GM12878 (cell line): ENCODE measurements at regions of chr7 and their contacts with region 1.

Region 1: DNA sequence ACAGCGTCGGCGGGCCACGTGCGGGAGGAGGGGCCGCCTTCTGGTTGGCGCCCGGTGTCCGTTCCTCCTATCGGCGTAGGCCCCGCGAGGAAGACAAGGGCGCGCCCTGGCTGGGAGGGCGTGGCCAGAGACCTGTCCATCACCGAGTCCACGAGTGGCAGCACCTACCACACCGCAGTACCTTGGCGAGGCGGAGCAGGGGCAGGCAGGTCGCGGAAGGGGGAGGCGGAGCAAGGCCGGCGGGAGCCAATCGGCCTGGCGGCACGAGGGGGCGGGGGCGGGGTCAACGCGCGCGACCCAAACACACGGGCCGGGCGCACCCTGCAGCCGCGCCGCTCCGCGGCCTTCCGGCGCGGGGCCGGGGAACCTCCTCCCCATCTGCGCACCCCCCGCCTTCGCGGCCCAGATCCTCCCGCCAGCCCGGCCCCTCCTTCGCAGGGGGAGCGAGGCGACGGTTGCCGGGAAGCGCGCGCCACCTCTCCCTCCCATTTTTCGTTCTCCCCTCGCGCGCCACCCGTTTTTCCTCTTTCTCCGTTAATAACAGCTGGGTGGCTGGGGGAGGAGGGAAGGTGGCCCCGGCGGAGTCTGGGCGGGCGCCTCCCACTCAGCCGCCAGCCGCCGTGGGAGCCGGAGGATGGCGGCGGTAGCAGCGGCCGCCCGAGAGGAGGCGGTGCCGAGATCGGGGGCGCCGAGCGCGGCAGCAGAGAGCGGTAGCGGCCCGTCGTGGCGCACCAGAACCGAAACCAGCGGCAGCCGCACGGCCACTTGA is at the start of gene ZNRF2:
- DNase-seq: peak; percentile 97
- ATAC-seq: peak; percentile 91
- H3K4me3 ChIP-seq: peak within 1 kb of the TSS; percentile 61; the same call in 1 of the 2 replicates
- H3K27ac ChIP-seq: peak within 1 kb of the TSS; percentile 83
- H3K4me1 ChIP-seq: peaks cover 12% of the 10 kb centered on the region
- H3K27me3 ChIP-seq: no peaks in the 10 kb centered on the region
- CTCF ChIP-seq: peak; percentile 21 to 63 (median 39); a peak in 4 of 6 replicates
- EP300 ChIP-seq: no peak
- POLR2A ChIP-seq: peak; percentile 84
- RAD21 ChIP-seq: peak; percentile 33; the same call in 1 of the 2 replicates
- polyA plus RNA-seq, gene ZNRF2: 3.1 to 4.0 TPM

Region 2: GRCh38 chr7:30193336-30193943 is 91.0 kb before region 1 on chr7:
- CTCF ChIA-PET with region 1: no interaction called
- POLR2A ChIA-PET with region 1: no interaction called
- RAD21 ChIA-PET with region 1: no interaction called
- SMC1A ChIA-PET with region 1: no interaction called
- in situ Hi-C with region 1: no loop called
- intact Hi-C with region 1: no loop called
- DNase-seq: no peak
- ATAC-seq: peak; percentile 87
- H3K4me3 ChIP-seq: no peak overlapping the region
- H3K27ac ChIP-seq: no peak overlapping the region
- H3K4me1 ChIP-seq: no peaks in the 10 kb centered on the region
- H3K27me3 ChIP-seq: no peaks in the 10 kb centered on the region
- CTCF ChIP-seq: no peak
- EP300 ChIP-seq: no peak
- POLR2A ChIP-seq: no peak
- RAD21 ChIP-seq: no peak

Region 3: GRCh38 chr7:30330134-30331111 is 45.9 kb after region 1 on chr7:
- CTCF ChIA-PET with region 1: interaction called, 7 read pairs
- POLR2A ChIA-PET with region 1: interaction called, 6 read pairs
- RAD21 ChIA-PET with region 1: interaction called, 6 read pairs
- SMC1A ChIA-PET with region 1: interaction called, 26 read pairs
- in situ Hi-C with region 1: no loop called
- intact Hi-C with region 1: loop called (anchors 2 kb)
- DNase-seq: peak; percentile 74
- ATAC-seq: peak; percentile 96
- H3K4me3 ChIP-seq: peak overlapping the region; percentile 4; the same call in 1 of the 2 replicates
- H3K27ac ChIP-seq: peak overlapping the region; percentile 60
- H3K4me1 ChIP-seq: peaks cover 20% of the 10 kb centered on the region
- H3K27me3 ChIP-seq: no peaks in the 10 kb centered on the region
- CTCF ChIP-seq: no peak
- EP300 ChIP-seq: peak; percentile 49 to 53; a peak in 1 of 4 replicates
- POLR2A ChIP-seq: no peak
- RAD21 ChIP-seq: no peak